ENCODE measurements at regions of chr10 and their contacts with region 1.

Region 1: GRCh38 chr10:90862908-90863514 is 5.2 kb upstream of the HTR7 start:
- DNase-seq: no peak
- ATAC-seq: peak; percentile 51
- H3K4me3 ChIP-seq: no peak overlapping the region
- H3K27ac ChIP-seq: no peak overlapping the region
- H3K4me1 ChIP-seq: peaks cover 0 to 15% of the 10 kb centered on the region in 2 donors
- H3K27me3 ChIP-seq: peaks cover 6 to 53% of the 10 kb centered on the region in 2 donors
- CTCF ChIP-seq: peak; percentile 57 to 67

Region 2: DNA sequence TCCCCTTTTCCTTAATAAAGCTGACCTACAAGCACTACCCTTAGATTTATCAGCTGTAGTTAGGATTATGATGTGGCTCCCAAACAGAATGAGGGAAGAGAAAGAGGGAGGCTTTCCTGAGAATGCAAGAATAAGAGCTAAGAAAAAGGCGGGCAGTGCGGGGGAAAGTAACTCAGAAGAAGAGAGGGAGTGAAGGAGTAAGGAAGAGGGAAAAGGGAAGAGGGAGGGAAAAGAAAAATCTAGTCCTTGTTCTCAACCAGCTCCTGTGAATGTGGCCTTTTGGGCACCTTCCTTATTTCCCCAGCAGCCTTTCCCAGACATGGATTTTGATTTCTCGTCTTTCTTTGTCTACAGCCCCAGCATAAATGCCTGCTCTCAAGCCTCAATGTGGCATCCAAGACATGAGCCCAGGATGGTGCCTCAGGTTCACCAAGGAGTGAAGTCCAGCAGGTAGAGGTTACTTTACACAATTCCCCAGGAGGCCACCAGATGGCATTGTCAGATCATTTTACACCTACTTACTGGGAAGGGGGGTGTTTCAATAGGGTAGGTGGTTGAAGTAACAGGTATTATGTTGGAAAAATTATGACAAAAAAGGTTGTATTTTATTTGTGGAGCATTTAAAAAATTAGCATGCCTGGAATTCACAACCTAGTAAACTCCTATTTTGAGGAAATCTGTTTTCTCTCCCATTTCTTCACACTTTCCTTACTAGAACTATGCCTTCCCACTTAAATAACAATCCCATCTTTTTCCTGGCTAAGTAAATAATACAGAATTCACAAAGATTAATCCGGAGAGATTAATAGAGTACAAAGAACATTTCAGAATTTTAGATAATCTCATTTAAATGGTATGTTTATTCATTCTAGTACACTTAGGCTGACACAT is 111.7 kb before region 1 on chr10:
- intact Hi-C with region 1: loop called in 1 of 2 experiments (anchors 10 kb)
- DNase-seq: peak in 1 of 4 donors; percentile 22
- ATAC-seq: peak; percentile 78
- H3K4me3 ChIP-seq: no peak overlapping the region
- H3K27ac ChIP-seq: no peak overlapping the region
- H3K4me1 ChIP-seq: no peaks in the 10 kb centered on the region
- H3K27me3 ChIP-seq: no peaks in the 10 kb centered on the region
- CTCF ChIP-seq: peak; percentile 2 to 65

Measured in left lung (tissue), 14 donors.